ENCODE measurements at regions of chr17 and their contacts with region 1.

Region 1: GRCh38 chr17:69460963-69461922 is 46.7 kb downstream of the MAP2K6 start:
- DNase-seq: no peak
- H3K4me3 ChIP-seq: peak overlapping the region in 1 of 4 experiments; percentile 3; a peak in 2 of 8 replicates
- H3K27ac ChIP-seq: no peak overlapping the region
- H3K4me1 ChIP-seq: peaks cover 5 to 19% (median 11%) of the 10 kb centered on the region in 4 experiments; a peak in 4 of 7 replicates
- H3K27me3 ChIP-seq: no peaks in the 10 kb centered on the region
- CTCF ChIP-seq: no peak
- EP300 ChIP-seq: no peak
- POLR2A ChIP-seq: no peak
- RAD21 ChIP-seq: no peak

Region 2: GRCh38 chr17:69437475-69437874 is 23.8 kb before region 1 on chr17:
- CTCF ChIA-PET with region 1: interaction called, 10 read pairs
- POLR2A ChIA-PET with region 1: no interaction called
- DNase-seq: peak in 1 of 2 experiments; percentile 8
- H3K4me3 ChIP-seq: no peak overlapping the region
- H3K27ac ChIP-seq: no peak overlapping the region
- H3K4me1 ChIP-seq: peaks cover 0 to 6% (median 2%) of the 10 kb centered on the region in 4 experiments; a peak in 4 of 7 replicates
- H3K27me3 ChIP-seq: no peaks in the 10 kb centered on the region
- CTCF ChIP-seq: no peak
- EP300 ChIP-seq: no peak
- POLR2A ChIP-seq: no peak
- RAD21 ChIP-seq: no peak

Region 3: DNA sequence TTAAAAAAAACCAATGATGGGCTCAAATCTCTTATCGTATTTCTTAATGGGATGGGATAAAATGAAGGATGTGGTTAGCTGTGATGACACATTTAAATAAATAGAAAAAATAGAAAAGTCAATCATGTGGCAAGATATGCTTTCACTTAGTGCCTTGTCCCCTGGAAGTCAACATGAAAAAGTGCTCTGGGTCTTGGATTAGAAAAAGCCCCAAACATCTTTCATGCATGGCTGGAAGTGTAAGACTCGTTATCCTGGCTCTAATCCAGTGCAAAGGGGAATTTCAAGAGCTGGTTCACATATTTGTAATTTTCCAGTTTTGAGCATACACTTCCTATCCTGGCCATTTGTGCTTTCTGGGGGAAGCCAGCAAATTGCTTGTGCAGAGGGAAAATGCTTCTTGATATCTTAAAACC is 114.1 kb after region 1 on chr17:
- CTCF ChIA-PET with region 1: no interaction called
- POLR2A ChIA-PET with region 1: no interaction called
- DNase-seq: no peak
- H3K4me3 ChIP-seq: no peak overlapping the region
- H3K27ac ChIP-seq: no peak overlapping the region
- H3K4me1 ChIP-seq: peaks cover 0 to 7% (median 6%) of the 10 kb centered on the region in 4 experiments; a peak in 3 of 7 replicates
- H3K27me3 ChIP-seq: no peaks in the 10 kb centered on the region
- CTCF ChIP-seq: no peak
- EP300 ChIP-seq: no peak
- POLR2A ChIP-seq: no peak
- RAD21 ChIP-seq: no peak

Region 4: GRCh38 chr17:69597898-69598692 is 136.9 kb after region 1 on chr17:
- CTCF ChIA-PET with region 1: no interaction called
- POLR2A ChIA-PET with region 1: no interaction called
- DNase-seq: no peak
- H3K4me3 ChIP-seq: no peak overlapping the region
- H3K27ac ChIP-seq: no peak overlapping the region
- H3K4me1 ChIP-seq: no peaks in the 10 kb centered on the region
- H3K27me3 ChIP-seq: no peaks in the 10 kb centered on the region
- CTCF ChIP-seq: no peak
- EP300 ChIP-seq: no peak
- POLR2A ChIP-seq: no peak
- RAD21 ChIP-seq: no peak

Region 5: DNA sequence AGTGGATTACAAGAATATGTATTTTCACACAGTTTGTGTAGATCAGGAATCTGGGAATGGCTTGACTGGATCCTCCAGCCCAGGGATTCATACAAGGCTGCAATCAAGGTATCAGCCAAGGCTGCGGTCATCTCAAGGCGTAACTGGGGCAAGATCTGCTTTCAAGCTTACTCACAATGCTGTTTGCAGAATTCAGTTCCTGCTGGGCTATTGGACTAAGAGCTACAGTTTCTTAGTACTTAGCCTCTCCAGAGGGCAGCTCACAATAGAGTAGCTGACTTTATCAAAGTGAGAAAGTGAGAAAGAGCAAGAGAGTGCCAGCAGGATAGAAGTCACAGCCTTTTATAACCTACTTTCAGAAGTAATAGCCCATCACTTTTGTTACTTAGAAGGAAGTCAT is 164.2 kb after region 1 on chr17:
- CTCF ChIA-PET with region 1: no interaction called
- POLR2A ChIA-PET with region 1: no interaction called
- DNase-seq: no peak
- H3K4me3 ChIP-seq: no peak overlapping the region
- H3K27ac ChIP-seq: no peak overlapping the region
- H3K4me1 ChIP-seq: no peaks in the 10 kb centered on the region
- H3K27me3 ChIP-seq: no peaks in the 10 kb centered on the region
- CTCF ChIP-seq: no peak
- EP300 ChIP-seq: no peak
- POLR2A ChIP-seq: no peak
- RAD21 ChIP-seq: no peak

Measured in H1 (cell line).